ENCODE measurements at regions of chr15 and their contacts with region 1.

Region 1: GRCh38 chr15:68229386-68230156 is at the start of gene CLN6:
- DNase-seq: peak; percentile 96
- H3K4me3 ChIP-seq: peak within 1 kb of the TSS; percentile 81 to 96 (median 92)
- H3K27ac ChIP-seq: peak within 1 kb of the TSS; percentile 43 to 93 (median 86)
- H3K4me1 ChIP-seq: peaks cover 13 to 77% (median 35%) of the 10 kb centered on the region in 6 donors
- H3K27me3 ChIP-seq: no peaks in the 10 kb centered on the region
- CTCF ChIP-seq: no peak
- POLR2A ChIP-seq: peak in 1 of 3 donors; percentile 21
- total RNA-seq, gene CLN6: 25.0 to 38.6 (median 29.7) TPM

Region 2: GRCh38 chr15:68177742-68178141 is 51.8 kb before region 1 on chr15:
- intact Hi-C with region 1: loop called (anchors 10 kb)
- DNase-seq: no peak
- H3K4me3 ChIP-seq: no peak overlapping the region
- H3K27ac ChIP-seq: no peak overlapping the region
- H3K4me1 ChIP-seq: peaks cover 0 to 7% (median 0%) of the 10 kb centered on the region in 6 donors
- H3K27me3 ChIP-seq: no peaks in the 10 kb centered on the region
- CTCF ChIP-seq: no peak
- POLR2A ChIP-seq: no peak

Measured in spleen (tissue), 13 donors.